GM18951 (cell line): ENCODE measurements at regions of chr2 and their contacts with region 1.

Region 1: DNA sequence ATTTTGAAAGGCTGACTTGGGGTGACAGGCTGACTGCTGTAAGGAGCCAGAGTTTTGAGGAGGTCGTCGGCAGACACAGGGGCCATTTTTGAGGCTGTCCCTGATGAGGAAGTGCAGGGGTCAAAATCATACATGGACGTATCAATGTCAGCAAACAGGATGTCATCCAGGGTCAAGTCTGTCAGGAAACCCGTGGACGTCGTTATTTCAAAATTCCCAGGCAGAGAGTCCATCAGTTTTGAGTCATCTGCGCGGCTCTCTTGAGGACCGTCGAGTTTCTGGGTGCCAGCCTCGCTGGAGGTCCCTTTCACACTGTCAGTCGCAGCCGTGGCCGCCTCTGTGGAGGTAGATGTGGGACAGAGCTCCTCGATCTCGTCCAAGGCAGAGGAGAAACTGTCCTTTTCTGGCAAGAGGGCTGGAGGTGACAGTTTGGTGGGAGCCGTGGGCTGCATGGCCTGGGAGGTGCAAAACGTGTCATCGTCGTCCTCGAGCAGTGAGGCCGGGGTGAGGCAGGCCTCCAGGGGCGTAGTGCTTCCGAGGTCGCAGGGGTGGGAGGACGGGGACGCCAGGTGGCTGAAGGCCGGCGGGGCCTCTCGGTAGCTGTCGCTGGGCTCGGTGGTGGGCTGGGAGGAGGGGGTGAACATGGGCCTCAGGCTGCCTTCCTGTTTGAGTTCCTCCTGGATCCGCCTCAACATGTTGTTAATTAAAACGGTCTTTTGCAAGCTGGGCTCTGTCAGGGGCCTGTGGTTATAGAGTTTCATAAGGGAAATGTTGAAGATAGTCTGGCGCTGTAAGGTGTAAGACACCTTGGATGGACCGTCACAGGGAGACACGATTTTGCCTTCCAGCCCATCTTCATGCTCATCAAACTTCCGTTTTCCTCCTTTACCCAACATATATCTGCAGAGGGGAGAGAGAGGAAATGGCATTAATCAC is 17.5 kb downstream of the SERTAD2 start:
- POLR2A ChIP-seq: no peak

Region 2: GRCh38 chr2:64865073-64865830 is 229.0 kb after region 1 on chr2:
- in situ Hi-C with region 1: loop called (anchors 10 kb)
- POLR2A ChIP-seq: no peak